ENCODE measurements at regions of chr10 and their contacts with region 1.

Region 1: GRCh38 chr10:96586419-96587263 is at the start of gene TM9SF3:
- DNase-seq: peak; percentile 97
- ATAC-seq: peak; percentile 64
- H3K4me3 Mint-ChIP-seq: no peak within 1 kb of the TSS
- H3K27ac Mint-ChIP-seq: peak within 1 kb of the TSS; percentile 92
- H3K4me1 Mint-ChIP-seq: peaks cover 33% of the 10 kb centered on the region
- H3K27me3 Mint-ChIP-seq: peaks cover 6% of the 10 kb centered on the region
- total RNA-seq, gene TM9SF3: 45.3 to 70.2 TPM

Region 2: GRCh38 chr10:95236068-95236903 is 1350.4 kb before region 1 on chr10:
- CTCF ChIA-PET with region 1: no interaction called
- POLR2A ChIA-PET with region 1: no interaction called
- intact Hi-C with region 1: loop called in 1 of 2 experiments (anchors 5 kb)
- DNase-seq: peak; percentile 56
- ATAC-seq: peak; percentile 87
- H3K4me3 Mint-ChIP-seq: peak overlapping the region; percentile 19
- H3K27ac Mint-ChIP-seq: peak overlapping the region; percentile 85
- H3K4me1 Mint-ChIP-seq: peaks cover 29% of the 10 kb centered on the region
- H3K27me3 Mint-ChIP-seq: peaks cover 15% of the 10 kb centered on the region

Region 3: GRCh38 chr10:96129387-96130325 is 457.0 kb before region 1 on chr10 and contains the start of gene ZNF518A:
- CTCF ChIA-PET with region 1: no interaction called
- POLR2A ChIA-PET with region 1: no interaction called
- intact Hi-C with region 1: loop called in 1 of 2 experiments (anchors 2 kb)
- DNase-seq: peak; percentile 93
- ATAC-seq: peak; percentile 88
- H3K4me3 Mint-ChIP-seq: peak within 1 kb of the TSS; percentile 83
- H3K27ac Mint-ChIP-seq: peak within 1 kb of the TSS; percentile 99
- H3K4me1 Mint-ChIP-seq: peaks cover 20% of the 10 kb centered on the region
- H3K27me3 Mint-ChIP-seq: peaks cover 26% of the 10 kb centered on the region
- total RNA-seq, gene ZNF518A: 13.9 to 14.2 TPM

Region 4: GRCh38 chr10:96719850-96720421 is 133.3 kb after region 1 on chr10:
- CTCF ChIA-PET with region 1: no interaction called
- POLR2A ChIA-PET with region 1: no interaction called
- intact Hi-C with region 1: loop called in 1 of 2 experiments (anchors 1 kb)
- DNase-seq: peak; percentile 77
- ATAC-seq: peak; percentile 68
- H3K4me3 Mint-ChIP-seq: peak overlapping the region; percentile 93
- H3K27ac Mint-ChIP-seq: peak overlapping the region; percentile 84
- H3K4me1 Mint-ChIP-seq: peaks cover 12% of the 10 kb centered on the region
- H3K27me3 Mint-ChIP-seq: peaks cover 2% of the 10 kb centered on the region

Region 5: DNA sequence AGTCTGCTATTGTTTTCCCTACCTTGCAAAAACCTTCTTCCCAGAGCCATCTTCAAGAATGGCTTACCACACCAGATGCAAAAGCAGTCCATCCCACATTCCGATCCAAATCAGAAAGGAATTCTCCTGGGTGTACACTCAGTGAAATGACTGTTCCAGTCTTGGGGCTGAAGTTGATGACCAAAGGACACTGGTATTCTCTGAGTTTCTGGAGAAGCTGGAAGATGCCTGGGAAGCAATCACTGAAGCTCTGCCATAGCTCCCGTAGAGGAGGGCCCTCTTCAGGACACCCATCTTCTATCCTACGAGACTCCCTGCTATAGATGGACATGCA is 401.2 kb after region 1 on chr10:
- CTCF ChIA-PET with region 1: no interaction called
- POLR2A ChIA-PET with region 1: no interaction called
- intact Hi-C with region 1: no loop called
- DNase-seq: no peak
- ATAC-seq: no peak
- H3K4me3 Mint-ChIP-seq: no peak overlapping the region
- H3K27ac Mint-ChIP-seq: no peak overlapping the region
- H3K4me1 Mint-ChIP-seq: peaks cover 18% of the 10 kb centered on the region
- H3K27me3 Mint-ChIP-seq: no peaks in the 10 kb centered on the region

Region 6: GRCh38 chr10:97292097-97292862 is 705.6 kb after region 1 on chr10 and contains the start of gene ARHGAP19:
- CTCF ChIA-PET with region 1: no interaction called
- POLR2A ChIA-PET with region 1: no interaction called
- intact Hi-C with region 1: loop called in 1 of 2 experiments (anchors 2 kb)
- DNase-seq: peak; percentile 97
- ATAC-seq: peak; percentile 99
- H3K4me3 Mint-ChIP-seq: peak within 1 kb of the TSS; percentile 93
- H3K27ac Mint-ChIP-seq: peak within 1 kb of the TSS; percentile 87
- H3K4me1 Mint-ChIP-seq: peaks cover 20% of the 10 kb centered on the region
- H3K27me3 Mint-ChIP-seq: peaks cover 2% of the 10 kb centered on the region
- total RNA-seq, gene ARHGAP19: 55.9 to 70.2 TPM

Region 7: GRCh38 chr10:97412891-97413304 is 826.3 kb after region 1 on chr10:
- CTCF ChIA-PET with region 1: no interaction called
- POLR2A ChIA-PET with region 1: no interaction called
- intact Hi-C with region 1: loop called in 1 of 2 experiments (anchors 10 kb)
- DNase-seq: peak; percentile 85
- ATAC-seq: peak; percentile 72
- H3K4me3 Mint-ChIP-seq: peak overlapping the region; percentile 37
- H3K27ac Mint-ChIP-seq: peak overlapping the region; percentile 87
- H3K4me1 Mint-ChIP-seq: peaks cover 52% of the 10 kb centered on the region
- H3K27me3 Mint-ChIP-seq: no peaks in the 10 kb centered on the region

Region 8: DNA sequence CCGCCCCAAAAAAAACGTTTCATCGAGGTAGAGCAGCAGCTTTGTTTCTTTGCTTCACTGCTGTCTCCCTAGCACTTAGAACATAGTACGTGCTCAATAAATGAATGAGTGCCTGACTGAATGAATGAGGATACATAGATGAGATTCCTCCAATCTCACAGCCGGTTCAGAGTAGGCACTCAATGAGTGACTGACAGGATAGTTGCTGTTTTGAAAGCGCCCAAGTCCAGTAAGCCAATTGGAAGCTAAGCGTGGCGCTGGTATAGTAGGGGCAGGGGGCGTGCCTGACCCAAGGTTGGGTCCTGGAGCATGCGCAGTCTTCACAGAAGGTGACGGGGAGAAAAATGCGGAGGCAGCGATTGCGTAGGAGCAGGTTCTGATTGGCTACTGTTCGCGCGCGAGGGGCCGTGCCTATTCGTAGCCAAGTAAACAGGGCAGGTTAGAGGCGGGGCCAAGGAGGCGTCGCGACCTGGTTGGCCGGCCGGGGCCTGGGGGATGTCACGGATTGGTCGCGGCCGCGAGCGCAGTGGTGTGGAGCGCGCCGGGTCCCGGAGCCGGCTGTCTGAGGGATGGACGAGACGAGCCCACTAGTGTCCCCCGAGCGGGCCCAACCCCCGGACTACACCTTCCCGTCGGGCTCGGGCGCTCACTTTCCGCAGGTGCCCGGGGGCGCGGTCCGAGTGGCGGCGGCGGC is 1053.7 kb after region 1 on chr10 and contains the start of gene PI4K2A:
- CTCF ChIA-PET with region 1: no interaction called
- POLR2A ChIA-PET with region 1: no interaction called
- intact Hi-C with region 1: loop called in 1 of 2 experiments (anchors 5 kb)
- DNase-seq: peak; percentile 100
- ATAC-seq: peak; percentile 99
- H3K4me3 Mint-ChIP-seq: peak within 1 kb of the TSS; percentile 97
- H3K27ac Mint-ChIP-seq: peak within 1 kb of the TSS; percentile 93
- H3K4me1 Mint-ChIP-seq: peaks cover 18% of the 10 kb centered on the region
- H3K27me3 Mint-ChIP-seq: no peaks in the 10 kb centered on the region
- total RNA-seq, gene PI4K2A: 8.5 to 8.9 TPM

Measured in activated CD4-positive, alpha-beta T cell treated with anti-CD3 and anti-CD28 coated beads for 36 hours (primary cell).